ENCODE measurements at regions of chr9 and their contacts with region 1.

Region 1: DNA sequence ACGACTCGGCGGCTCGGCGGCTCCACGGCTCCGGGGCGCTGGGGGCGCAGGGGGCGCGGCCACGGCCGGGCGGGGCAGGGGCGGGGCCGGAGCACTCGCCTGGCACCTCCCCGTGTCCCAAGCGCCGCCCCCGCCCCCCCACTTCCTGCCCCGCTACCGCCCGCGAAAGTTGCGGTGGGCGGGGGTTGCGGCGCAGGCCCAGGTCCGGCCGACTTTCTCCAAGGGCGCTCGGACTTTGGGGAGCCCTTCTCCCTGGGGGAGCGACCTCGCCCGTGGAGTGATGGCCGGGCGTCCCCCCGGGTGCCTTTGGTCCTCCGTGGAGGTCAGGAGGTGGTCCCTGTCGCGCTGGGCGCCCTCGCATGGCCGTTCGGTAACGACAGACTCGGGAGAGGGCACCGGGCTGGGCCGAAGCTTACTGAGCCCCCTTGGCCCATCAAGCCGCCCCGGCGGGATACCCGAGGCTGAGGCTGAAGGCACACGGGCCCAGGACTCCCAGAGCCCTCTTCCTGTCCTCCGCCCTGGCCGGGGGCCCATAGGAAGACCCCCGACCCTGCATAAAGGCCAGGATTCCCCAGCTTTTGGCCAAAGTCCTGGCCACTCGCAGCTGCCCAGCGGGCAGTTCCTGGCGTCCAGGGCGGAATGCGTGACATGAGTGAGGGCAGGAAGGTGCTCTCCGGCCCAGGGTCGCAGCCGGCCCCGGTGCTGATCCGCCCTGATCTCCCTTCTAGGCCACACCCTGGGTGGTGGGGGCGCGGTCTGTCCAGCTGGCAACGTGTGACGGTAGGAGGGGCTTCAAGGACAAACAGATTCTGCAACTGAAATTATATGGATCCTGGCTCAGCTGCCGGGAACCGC is 883 bp upstream of the VAV2 start:
- H3K4me3 Mint-ChIP-seq: peak overlapping the region; percentile 77
- H3K27ac Mint-ChIP-seq: peak overlapping the region; percentile 84
- H3K4me1 Mint-ChIP-seq: peaks cover 35% of the 10 kb centered on the region
- H3K27me3 Mint-ChIP-seq: peaks cover 31% of the 10 kb centered on the region

Region 2: DNA sequence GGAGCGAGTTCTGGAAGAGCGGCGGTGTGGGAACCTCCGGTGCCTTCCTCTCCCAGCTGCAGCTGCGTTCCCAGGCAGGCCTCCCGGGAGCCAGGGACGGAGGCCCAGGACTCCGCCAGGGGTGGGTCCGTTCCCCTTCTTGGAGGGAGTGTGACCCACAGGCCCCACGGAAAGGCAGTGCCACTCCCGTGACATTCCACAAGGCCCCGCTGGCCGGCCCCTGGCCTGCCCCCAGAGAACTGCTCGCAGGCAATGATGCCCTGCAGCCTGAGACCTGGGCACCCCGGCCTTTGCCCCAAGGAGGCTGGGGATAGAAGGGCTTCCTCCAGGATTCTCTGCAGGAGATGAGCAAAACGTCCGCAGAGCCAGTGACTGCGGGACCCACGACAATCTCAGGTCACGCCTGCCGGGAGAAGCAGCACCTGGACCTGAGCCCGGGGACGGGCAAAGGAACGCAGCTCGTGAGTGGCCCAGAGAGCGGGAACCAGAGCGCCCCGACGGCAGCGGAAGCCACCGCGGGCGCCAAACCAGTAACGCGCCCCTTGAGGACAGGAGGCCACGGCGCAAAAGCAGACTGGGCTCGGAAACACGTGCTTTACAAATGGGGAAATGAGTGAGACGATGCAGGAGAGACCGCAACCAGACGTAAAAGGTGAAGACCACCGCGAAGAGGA is 793.2 kb before region 1 on chr9:
- intact Hi-C with region 1: no loop called
- H3K4me3 Mint-ChIP-seq: peak overlapping the region; percentile 59
- H3K27ac Mint-ChIP-seq: no peak overlapping the region
- H3K4me1 Mint-ChIP-seq: peaks cover 5% of the 10 kb centered on the region
- H3K27me3 Mint-ChIP-seq: peaks cover 18% of the 10 kb centered on the region

Region 3: GRCh38 chr9:133532937-133533668 is 459.9 kb before region 1 on chr9:
- intact Hi-C with region 1: loop called (anchors 10 kb)
- H3K4me3 Mint-ChIP-seq: no peak overlapping the region
- H3K27ac Mint-ChIP-seq: no peak overlapping the region
- H3K4me1 Mint-ChIP-seq: peaks cover 5% of the 10 kb centered on the region
- H3K27me3 Mint-ChIP-seq: peaks cover 61% of the 10 kb centered on the region

Region 4: DNA sequence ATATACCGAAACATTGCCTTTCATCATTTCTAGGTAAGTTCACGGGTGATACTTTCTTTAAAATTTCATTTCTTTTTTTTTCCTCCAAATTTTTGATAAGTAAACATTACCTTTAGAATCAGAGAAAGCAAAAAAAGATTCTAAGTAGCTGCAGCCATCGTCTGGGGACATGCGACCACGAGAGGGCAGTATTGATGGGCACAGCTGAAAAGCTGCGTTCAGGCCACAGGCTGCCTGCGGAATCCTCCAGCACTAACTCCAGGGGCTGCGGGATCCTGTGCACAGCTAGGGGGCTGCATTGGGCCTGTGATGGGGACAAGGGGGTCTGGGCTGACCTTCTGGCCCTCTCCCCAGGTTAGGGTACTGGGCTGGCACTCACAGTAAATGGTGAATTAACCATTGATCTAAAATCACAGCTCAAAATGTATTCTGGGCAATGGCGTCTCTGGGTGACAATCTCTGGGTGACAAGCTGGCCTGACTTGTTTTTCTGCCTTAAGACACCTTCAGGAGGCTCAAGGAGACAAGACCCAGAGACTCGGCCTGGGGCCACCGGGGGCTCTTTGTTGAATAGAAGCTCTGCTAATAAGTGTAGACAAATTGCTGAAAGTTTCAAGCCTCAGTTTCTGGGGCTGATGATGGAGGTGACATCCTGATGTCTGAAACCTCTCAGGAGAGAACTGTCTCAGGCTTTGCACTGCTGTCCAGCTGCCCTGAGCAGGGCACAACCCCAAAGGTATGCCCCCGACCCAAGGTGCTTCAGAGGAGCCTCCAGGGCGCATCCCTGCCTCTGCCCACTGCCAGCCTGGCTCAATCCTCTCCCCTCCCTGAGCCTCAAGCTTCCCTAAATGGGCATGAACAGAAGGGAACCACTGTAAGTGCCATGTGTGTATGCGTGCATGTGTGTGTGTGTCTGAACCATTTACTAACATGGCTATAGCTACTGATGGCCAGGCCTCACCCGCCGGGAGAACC is 210.6 kb before region 1 on chr9:
- intact Hi-C with region 1: loop called (anchors 1 kb)
- H3K4me3 Mint-ChIP-seq: no peak overlapping the region
- H3K27ac Mint-ChIP-seq: peak overlapping the region; percentile 58
- H3K4me1 Mint-ChIP-seq: peaks cover 44% of the 10 kb centered on the region
- H3K27me3 Mint-ChIP-seq: no peaks in the 10 kb centered on the region

Region 5: DNA sequence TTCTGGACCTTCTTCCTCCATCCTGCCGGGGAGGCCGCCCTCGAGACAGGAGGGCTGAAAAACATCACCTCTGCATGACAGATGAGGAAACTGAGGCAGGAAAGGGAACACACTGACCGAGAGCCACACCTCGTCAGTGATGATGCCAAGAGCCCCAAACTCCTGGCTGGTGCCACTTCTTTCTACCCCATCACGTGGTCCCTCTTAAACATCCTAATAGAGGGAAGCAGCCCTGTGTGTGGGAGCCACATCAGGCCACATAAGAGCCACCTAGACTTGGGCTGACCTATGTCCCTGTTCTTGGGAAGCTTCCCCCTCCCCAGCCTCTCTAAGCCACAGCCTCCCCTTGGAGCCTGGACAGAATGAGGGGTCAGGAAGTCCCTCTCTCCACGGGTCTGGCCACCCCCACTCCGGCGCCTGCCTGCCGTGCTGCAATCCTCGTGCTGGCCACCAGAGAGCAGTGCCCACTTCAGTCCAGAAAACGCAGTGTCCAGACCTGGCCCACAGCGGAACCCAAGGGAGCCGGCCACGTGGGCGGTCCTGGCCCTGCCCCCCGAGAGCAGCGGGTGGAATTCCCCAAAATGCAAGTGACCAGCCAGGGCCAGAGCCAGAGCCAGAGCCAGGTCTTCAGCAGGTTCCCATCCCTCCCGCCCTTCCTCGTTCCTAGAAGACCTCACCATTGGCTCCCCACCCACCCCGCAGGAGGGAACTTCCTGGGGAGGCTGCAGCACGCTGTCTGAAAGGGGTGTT is 200.1 kb before region 1 on chr9:
- intact Hi-C with region 1: loop called (anchors 1 kb)
- H3K4me3 Mint-ChIP-seq: peak overlapping the region; percentile 37
- H3K27ac Mint-ChIP-seq: peak overlapping the region; percentile 67
- H3K4me1 Mint-ChIP-seq: peaks cover 39% of the 10 kb centered on the region
- H3K27me3 Mint-ChIP-seq: peaks cover 16% of the 10 kb centered on the region

Region 6: GRCh38 chr9:133835255-133835901 is 157.6 kb before region 1 on chr9:
- intact Hi-C with region 1: no loop called
- H3K4me3 Mint-ChIP-seq: no peak overlapping the region
- H3K27ac Mint-ChIP-seq: no peak overlapping the region
- H3K4me1 Mint-ChIP-seq: peaks cover 29% of the 10 kb centered on the region
- H3K27me3 Mint-ChIP-seq: no peaks in the 10 kb centered on the region

Region 7: DNA sequence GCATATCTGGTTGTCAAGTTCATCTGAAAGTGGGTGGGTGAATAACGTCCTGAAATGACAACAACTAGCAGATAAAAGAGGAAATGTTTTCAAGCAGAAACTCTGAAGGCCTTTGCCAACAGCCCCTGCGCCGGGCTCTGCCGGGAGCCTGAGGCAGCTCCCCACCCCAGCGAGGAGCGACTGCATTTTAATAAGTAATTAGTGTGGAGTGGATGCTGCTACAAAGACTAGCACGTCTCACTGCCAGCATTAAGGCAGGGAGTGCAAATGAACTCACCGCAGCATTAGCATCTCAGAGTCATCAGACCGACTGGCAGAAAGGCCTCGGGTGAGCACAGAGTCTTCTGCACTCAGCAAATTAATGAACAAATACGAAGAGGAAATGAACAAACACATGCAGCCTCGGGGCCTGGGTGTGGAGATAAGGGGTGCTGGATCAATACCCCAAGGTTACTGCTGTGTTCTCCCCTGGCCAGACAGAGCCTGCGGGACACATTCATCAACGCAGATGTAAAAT is 64.7 kb before region 1 on chr9:
- intact Hi-C with region 1: loop called (anchors 5 kb)
- H3K4me3 Mint-ChIP-seq: no peak overlapping the region
- H3K27ac Mint-ChIP-seq: peak overlapping the region; percentile 79
- H3K4me1 Mint-ChIP-seq: peaks cover 31% of the 10 kb centered on the region
- H3K27me3 Mint-ChIP-seq: no peaks in the 10 kb centered on the region

Region 8: GRCh38 chr9:134099123-134099787 is 106.2 kb after region 1 on chr9:
- intact Hi-C with region 1: loop called (anchors 5 kb)
- H3K4me3 Mint-ChIP-seq: no peak overlapping the region
- H3K27ac Mint-ChIP-seq: no peak overlapping the region
- H3K4me1 Mint-ChIP-seq: peaks cover 11% of the 10 kb centered on the region
- H3K27me3 Mint-ChIP-seq: peaks cover 33% of the 10 kb centered on the region

Region 9: DNA sequence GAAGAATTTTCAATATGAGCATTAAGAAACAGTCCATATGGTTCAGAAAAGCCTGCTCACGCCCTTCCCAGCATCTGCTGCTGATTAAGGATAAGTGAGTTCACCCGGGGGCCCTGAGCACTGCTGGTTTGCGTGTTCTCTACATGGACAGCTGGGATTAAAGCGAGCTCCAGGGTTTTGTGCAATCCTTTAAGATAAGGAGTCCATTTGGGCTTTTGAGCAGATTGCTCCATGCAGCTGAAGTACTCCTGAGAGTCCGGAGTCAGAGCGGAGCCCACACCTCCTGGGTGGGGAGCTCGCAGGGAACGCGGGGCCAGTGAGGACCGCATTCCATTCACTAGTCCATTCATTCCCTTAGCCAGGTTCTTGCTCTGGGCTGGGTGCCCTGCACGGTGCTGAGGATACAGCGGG is 499.3 kb after region 1 on chr9:
- intact Hi-C with region 1: no loop called
- H3K4me3 Mint-ChIP-seq: no peak overlapping the region
- H3K27ac Mint-ChIP-seq: no peak overlapping the region
- H3K4me1 Mint-ChIP-seq: no peaks in the 10 kb centered on the region
- H3K27me3 Mint-ChIP-seq: peaks cover 21% of the 10 kb centered on the region

Measured in dendritic cell treated with granulocyte-macrophage colony-stimulating factor and Interleukin-4, amounts not matched to agents 40 ng/mL and 50 ng/mL, for 4 days (primary cell).